ENCODE measurements at regions of chr14 and their contacts with region 1.

Region 1: GRCh38 chr14:94681300-94682060 is 69.3 kb downstream of the SERPINA3 start:
- H3K4me3 Mint-ChIP-seq: no peak overlapping the region
- H3K27ac Mint-ChIP-seq: no peak overlapping the region
- H3K4me1 Mint-ChIP-seq: peaks cover 9% of the 10 kb centered on the region
- H3K27me3 Mint-ChIP-seq: peaks cover 14% of the 10 kb centered on the region

Region 2: GRCh38 chr14:94439453-94440057 is 241.9 kb before region 1 on chr14:
- intact Hi-C with region 1: loop called (anchors 5 kb)
- H3K4me3 Mint-ChIP-seq: no peak overlapping the region
- H3K27ac Mint-ChIP-seq: no peak overlapping the region
- H3K4me1 Mint-ChIP-seq: no peaks in the 10 kb centered on the region
- H3K27me3 Mint-ChIP-seq: peaks cover 23% of the 10 kb centered on the region

Region 3: GRCh38 chr14:94636522-94637412 is 44.7 kb before region 1 on chr14:
- intact Hi-C with region 1: loop called (anchors 2 kb)
- H3K4me3 Mint-ChIP-seq: no peak overlapping the region
- H3K27ac Mint-ChIP-seq: no peak overlapping the region
- H3K4me1 Mint-ChIP-seq: peaks cover 4% of the 10 kb centered on the region
- H3K27me3 Mint-ChIP-seq: peaks cover 11% of the 10 kb centered on the region

Region 4: GRCh38 chr14:95340201-95340697 is 658.8 kb after region 1 on chr14:
- intact Hi-C with region 1: no loop called
- H3K4me3 Mint-ChIP-seq: no peak overlapping the region
- H3K27ac Mint-ChIP-seq: no peak overlapping the region
- H3K4me1 Mint-ChIP-seq: no peaks in the 10 kb centered on the region
- H3K27me3 Mint-ChIP-seq: peaks cover 27% of the 10 kb centered on the region

Measured in dendritic cell treated with granulocyte-macrophage colony-stimulating factor and Interleukin-4, amounts not matched to agents 40 ng/mL and 50 ng/mL, for 4 days (primary cell).